ENCODE measurements at regions of chr1 and their contacts with region 1.

Region 1: GRCh38 chr1:56345831-56346230 is 233.5 kb downstream of the PLPP3 start:
- DNase-seq: no peak

Region 2: GRCh38 chr1:56380531-56380930 is 34.7 kb after region 1 on chr1:
- intact Hi-C with region 1: loop called (anchors 5 kb)
- DNase-seq: no peak

Measured in posterior cingulate gyrus (tissue), 11 donors.